GM12878 (cell line): ENCODE measurements at regions of chr6 and their contacts with region 1.

Region 1: GRCh38 chr6:9388596-9388995 is 953.3 kb upstream of the SLC35B3 start:
- DNase-seq: no peak
- ATAC-seq: no peak
- H3K4me3 ChIP-seq: no peak overlapping the region
- H3K27ac ChIP-seq: no peak overlapping the region
- H3K4me1 ChIP-seq: no peaks in the 10 kb centered on the region
- H3K27me3 ChIP-seq: no peaks in the 10 kb centered on the region
- CTCF ChIP-seq: no peak
- EP300 ChIP-seq: no peak
- POLR2A ChIP-seq: no peak
- RAD21 ChIP-seq: no peak

Region 2: GRCh38 chr6:9370480-9370879 is 18.1 kb before region 1 on chr6:
- CTCF ChIA-PET with region 1: interaction called, 3 read pairs
- POLR2A ChIA-PET with region 1: no interaction called
- RAD21 ChIA-PET with region 1: no interaction called
- SMC1A ChIA-PET with region 1: interaction called, 14 read pairs
- in situ Hi-C with region 1: no loop called
- intact Hi-C with region 1: no loop called
- DNase-seq: no peak
- ATAC-seq: peak; percentile 84
- H3K4me3 ChIP-seq: no peak overlapping the region
- H3K27ac ChIP-seq: no peak overlapping the region
- H3K4me1 ChIP-seq: no peaks in the 10 kb centered on the region
- H3K27me3 ChIP-seq: no peaks in the 10 kb centered on the region
- CTCF ChIP-seq: no peak
- EP300 ChIP-seq: no peak
- POLR2A ChIP-seq: no peak
- RAD21 ChIP-seq: no peak